ENCODE measurements at regions of chr5 and their contacts with region 1.

Region 1: DNA sequence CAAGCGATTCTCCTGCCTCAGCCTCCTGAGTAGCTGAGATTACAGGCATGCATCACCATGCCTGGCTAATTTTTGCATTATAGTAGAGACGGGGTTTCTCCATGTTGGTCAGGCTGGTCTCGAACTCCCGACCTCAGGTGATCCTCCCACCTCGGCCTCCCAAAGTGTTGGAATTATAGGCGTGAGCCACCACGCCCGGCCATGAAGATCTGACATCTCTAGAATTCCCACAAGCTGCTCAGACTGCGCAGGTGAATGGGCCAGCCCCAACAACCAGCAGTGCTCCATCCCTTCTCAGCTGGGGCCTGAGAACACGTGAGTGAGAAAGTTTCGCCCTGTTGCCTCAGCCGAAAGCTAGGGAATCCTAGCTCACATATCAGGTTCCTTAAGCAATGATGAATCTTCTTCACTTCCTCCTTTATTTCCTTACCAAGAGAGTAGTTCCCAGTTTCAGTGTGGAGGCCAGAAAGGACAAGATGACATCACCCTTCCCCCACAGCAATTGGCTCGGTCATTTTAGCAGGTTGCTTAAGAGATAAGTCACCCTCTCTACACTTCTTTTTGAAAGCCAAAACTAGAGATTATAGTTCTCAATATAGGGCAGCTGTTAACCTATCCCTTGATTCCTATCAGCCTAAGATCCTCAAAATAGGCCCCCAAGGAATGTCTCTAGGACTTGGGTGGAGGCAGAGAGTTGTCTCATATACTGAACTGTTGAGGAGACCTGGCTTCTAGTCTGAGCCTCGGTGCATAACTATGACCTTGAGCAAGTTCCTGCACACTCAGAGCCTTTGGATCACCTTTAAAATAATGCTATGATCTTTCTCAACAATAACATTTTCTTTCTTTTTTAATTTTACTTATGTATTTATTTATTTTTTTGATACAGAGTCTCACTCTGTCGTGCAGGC is 23.9 kb upstream of the PPP2CA start:
- DNase-seq: no peak
- ATAC-seq: peak; percentile 53

Region 2: GRCh38 chr5:134209477-134210240 is 40.1 kb before region 1 on chr5:
- intact Hi-C with region 1: loop called (anchors 5 kb)
- DNase-seq: no peak
- ATAC-seq: peak; percentile 65

Region 3: GRCh38 chr5:134503088-134503946 is 253.6 kb after region 1 on chr5:
- intact Hi-C with region 1: no loop called
- DNase-seq: peak; percentile 79
- ATAC-seq: peak; percentile 55